H1 (cell line): ENCODE measurements at regions of chr22 and their contacts with region 1.

Region 1: GRCh38 chr22:44735540-44736488 is 16.6 kb upstream of the ARHGAP8 start:
- DNase-seq: peak; percentile 49 to 100
- H3K4me3 ChIP-seq: no peak overlapping the region
- H3K27ac ChIP-seq: no peak overlapping the region
- H3K4me1 ChIP-seq: peaks cover 0 to 19% (median 12%) of the 10 kb centered on the region in 4 experiments; a peak in 5 of 7 replicates
- H3K27me3 ChIP-seq: no peaks in the 10 kb centered on the region; a peak in 1 of 7 replicates
- CTCF ChIP-seq: peak; percentile 96 to 98 (median 97)
- EP300 ChIP-seq: no peak
- POLR2A ChIP-seq: no peak
- RAD21 ChIP-seq: peak; percentile 96 to 97

Region 2: GRCh38 chr22:44684506-44685383 is 51.1 kb before region 1 on chr22:
- CTCF ChIA-PET with region 1: interaction called, 38 read pairs
- POLR2A ChIA-PET with region 1: interaction called, 3 read pairs
- DNase-seq: peak; percentile 85 to 92
- H3K4me3 ChIP-seq: no peak overlapping the region
- H3K27ac ChIP-seq: no peak overlapping the region
- H3K4me1 ChIP-seq: peaks cover 0 to 10% (median 5%) of the 10 kb centered on the region in 4 experiments; a peak in 5 of 7 replicates
- H3K27me3 ChIP-seq: no peaks in the 10 kb centered on the region; a peak in 1 of 7 replicates
- CTCF ChIP-seq: peak; percentile 98 to 100 (median 99)
- EP300 ChIP-seq: peak in 1 of 2 experiments; percentile 71; a peak in 1 of 3 replicates
- POLR2A ChIP-seq: no peak
- RAD21 ChIP-seq: peak; percentile 60 to 71

Region 3: GRCh38 chr22:44697423-44698141 is 38.2 kb before region 1 on chr22:
- CTCF ChIA-PET with region 1: interaction called, 102 read pairs
- POLR2A ChIA-PET with region 1: interaction called, 3 read pairs
- DNase-seq: peak; percentile 75 to 98
- H3K4me3 ChIP-seq: no peak overlapping the region
- H3K27ac ChIP-seq: no peak overlapping the region
- H3K4me1 ChIP-seq: peaks cover 0 to 16% (median 10%) of the 10 kb centered on the region in 4 experiments; a peak in 6 of 7 replicates
- H3K27me3 ChIP-seq: peaks cover 0 to 13% (median 9%) of the 10 kb centered on the region in 4 experiments; a peak in 6 of 7 replicates
- CTCF ChIP-seq: peak; percentile 97 to 98 (median 98)
- EP300 ChIP-seq: no peak
- POLR2A ChIP-seq: no peak
- RAD21 ChIP-seq: peak; percentile 92 to 96

Region 4: GRCh38 chr22:44702479-44703198 is 33.2 kb before region 1 on chr22:
- CTCF ChIA-PET with region 1: interaction called, 102 read pairs
- POLR2A ChIA-PET with region 1: interaction called, 3 read pairs
- DNase-seq: peak in 1 of 2 experiments; percentile 75
- H3K4me3 ChIP-seq: peak overlapping the region; percentile 64 to 87 (median 64)
- H3K27ac ChIP-seq: no peak overlapping the region
- H3K4me1 ChIP-seq: peaks cover 0 to 24% (median 14%) of the 10 kb centered on the region in 4 experiments; a peak in 6 of 7 replicates
- H3K27me3 ChIP-seq: peaks cover 0 to 28% (median 19%) of the 10 kb centered on the region in 4 experiments; a peak in 6 of 7 replicates
- CTCF ChIP-seq: no peak
- EP300 ChIP-seq: no peak
- POLR2A ChIP-seq: no peak
- RAD21 ChIP-seq: no peak

Region 5: DNA sequence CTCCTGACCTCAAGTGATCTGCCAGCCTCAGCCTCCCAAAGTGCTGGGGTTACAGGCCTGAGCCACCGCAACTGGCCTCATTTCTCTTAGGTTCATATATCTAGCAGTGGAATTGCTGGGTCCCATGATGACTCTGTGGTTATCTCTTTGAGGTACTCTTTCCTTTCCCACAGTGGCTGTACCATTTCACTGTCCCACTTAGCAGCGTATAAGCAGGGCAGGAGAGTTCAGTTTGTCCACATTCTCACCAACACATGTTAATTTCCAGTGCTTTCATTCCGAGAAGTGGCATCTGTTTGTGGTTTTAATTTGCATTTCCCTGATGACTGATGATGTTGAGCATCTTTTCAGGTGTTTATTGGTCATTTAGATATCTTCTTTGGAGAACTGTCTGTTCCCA is 17.4 kb before region 1 on chr22:
- CTCF ChIA-PET with region 1: interaction called, 33 read pairs
- POLR2A ChIA-PET with region 1: interaction called, 3 read pairs
- DNase-seq: no peak
- H3K4me3 ChIP-seq: no peak overlapping the region
- H3K27ac ChIP-seq: no peak overlapping the region
- H3K4me1 ChIP-seq: peaks cover 0 to 8% (median 3%) of the 10 kb centered on the region in 4 experiments; a peak in 6 of 7 replicates
- H3K27me3 ChIP-seq: no peaks in the 10 kb centered on the region
- CTCF ChIP-seq: no peak
- EP300 ChIP-seq: no peak
- POLR2A ChIP-seq: no peak
- RAD21 ChIP-seq: no peak

Region 6: DNA sequence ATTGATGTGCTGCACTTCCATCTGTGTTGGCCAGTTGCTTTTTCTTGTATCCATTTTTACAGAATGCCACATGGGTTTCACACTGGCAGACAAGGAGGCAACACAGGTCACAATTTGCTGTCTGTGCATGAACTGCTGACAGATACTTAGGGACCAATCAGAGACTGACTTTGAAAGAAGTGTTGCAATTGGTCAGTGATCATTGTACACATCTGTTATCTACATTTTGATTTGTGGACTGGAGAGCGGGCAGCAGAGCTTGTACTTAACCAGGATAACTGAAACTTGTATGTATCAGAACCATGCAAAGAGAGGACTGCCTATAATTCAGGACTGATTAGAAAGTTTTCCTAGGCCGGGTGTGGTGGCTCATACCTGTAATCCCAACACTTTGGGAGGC is 12.0 kb before region 1 on chr22:
- CTCF ChIA-PET with region 1: interaction called, 33 read pairs
- POLR2A ChIA-PET with region 1: interaction called, 5 read pairs
- DNase-seq: no peak
- H3K4me3 ChIP-seq: no peak overlapping the region
- H3K27ac ChIP-seq: no peak overlapping the region
- H3K4me1 ChIP-seq: peaks cover 0 to 8% (median 3%) of the 10 kb centered on the region in 4 experiments; a peak in 6 of 7 replicates
- H3K27me3 ChIP-seq: no peaks in the 10 kb centered on the region
- CTCF ChIP-seq: no peak
- EP300 ChIP-seq: no peak
- POLR2A ChIP-seq: no peak
- RAD21 ChIP-seq: no peak

Region 7: DNA sequence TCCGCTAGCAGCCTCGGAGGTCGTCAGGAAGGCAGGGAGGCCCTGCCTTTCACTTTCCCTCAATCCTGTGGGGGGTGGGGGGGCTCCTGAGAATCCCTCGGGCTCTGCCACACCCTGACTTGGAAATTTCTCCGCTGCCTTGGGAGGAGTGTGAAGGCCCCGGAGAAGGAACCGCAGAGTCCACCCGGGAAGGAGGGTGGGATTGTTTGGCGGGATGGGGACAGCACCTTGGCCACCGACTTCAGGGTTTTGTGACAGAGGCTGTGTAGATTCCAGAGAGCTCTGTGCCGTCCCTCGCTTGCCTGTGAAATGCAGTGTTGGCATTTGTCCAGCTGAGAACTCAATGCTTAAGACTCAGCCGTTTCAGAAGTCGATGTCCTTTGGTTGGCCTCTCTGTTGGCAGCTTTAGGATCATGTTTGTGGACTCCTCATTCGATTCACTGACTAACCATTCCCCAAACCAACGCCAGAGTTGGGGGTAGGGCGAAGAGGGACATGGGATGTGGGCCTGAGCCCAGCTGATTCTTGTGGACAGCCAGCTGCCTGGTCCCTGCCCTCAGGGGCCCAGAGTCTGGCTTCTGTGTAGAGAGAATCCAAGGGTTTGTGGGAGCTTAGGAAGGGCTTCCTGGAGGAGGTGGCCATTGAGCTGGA is 17.9 kb after region 1 on chr22:
- CTCF ChIA-PET with region 1: interaction called, 31 read pairs
- POLR2A ChIA-PET with region 1: interaction called, 4 read pairs
- DNase-seq: no peak
- H3K4me3 ChIP-seq: peak overlapping the region; percentile 44 to 93 (median 62); a peak in 7 of 8 replicates
- H3K27ac ChIP-seq: no peak overlapping the region
- H3K4me1 ChIP-seq: peaks cover 4 to 25% (median 19%) of the 10 kb centered on the region in 4 experiments
- H3K27me3 ChIP-seq: peaks cover 0 to 7% (median 4%) of the 10 kb centered on the region in 4 experiments; a peak in 4 of 7 replicates
- CTCF ChIP-seq: no peak
- EP300 ChIP-seq: no peak
- POLR2A ChIP-seq: no peak
- RAD21 ChIP-seq: no peak